ENCODE measurements at regions of chr13 and their contacts with region 1.

Region 1: DNA sequence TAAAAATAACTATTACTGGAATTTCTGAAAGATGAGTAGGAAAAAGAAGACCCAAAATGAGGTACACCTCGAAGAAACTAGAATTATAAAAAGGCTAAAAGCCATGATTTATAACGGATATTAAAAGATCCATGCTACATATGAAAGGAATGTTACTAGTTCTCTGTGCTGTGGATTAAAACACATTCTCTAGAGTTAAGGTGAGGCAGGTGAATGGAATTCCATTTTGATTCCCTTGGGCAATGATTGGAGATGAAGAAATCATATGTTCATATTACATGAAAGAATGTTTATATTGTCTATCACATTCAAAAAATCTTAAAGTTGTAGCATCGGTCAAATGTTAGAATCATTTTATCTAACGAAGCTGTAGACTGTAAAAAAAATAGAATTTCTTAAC is 783.7 kb downstream of the PCDH9 start:
- DNase-seq: no peak
- H3K4me3 ChIP-seq: no peak overlapping the region
- H3K27ac ChIP-seq: no peak overlapping the region
- H3K4me1 ChIP-seq: no peaks in the 10 kb centered on the region
- H3K27me3 ChIP-seq: no peaks in the 10 kb centered on the region
- CTCF ChIP-seq: no peak
- POLR2A ChIP-seq: no peak

Region 2: GRCh38 chr13:65149687-65150086 is 1296.7 kb before region 1 on chr13:
- intact Hi-C with region 1: loop called (anchors 10 kb)
- DNase-seq: no peak
- H3K4me3 ChIP-seq: no peak overlapping the region
- H3K27ac ChIP-seq: no peak overlapping the region
- H3K4me1 ChIP-seq: no peaks in the 10 kb centered on the region
- H3K27me3 ChIP-seq: no peaks in the 10 kb centered on the region
- CTCF ChIP-seq: no peak
- POLR2A ChIP-seq: no peak

Region 3: DNA sequence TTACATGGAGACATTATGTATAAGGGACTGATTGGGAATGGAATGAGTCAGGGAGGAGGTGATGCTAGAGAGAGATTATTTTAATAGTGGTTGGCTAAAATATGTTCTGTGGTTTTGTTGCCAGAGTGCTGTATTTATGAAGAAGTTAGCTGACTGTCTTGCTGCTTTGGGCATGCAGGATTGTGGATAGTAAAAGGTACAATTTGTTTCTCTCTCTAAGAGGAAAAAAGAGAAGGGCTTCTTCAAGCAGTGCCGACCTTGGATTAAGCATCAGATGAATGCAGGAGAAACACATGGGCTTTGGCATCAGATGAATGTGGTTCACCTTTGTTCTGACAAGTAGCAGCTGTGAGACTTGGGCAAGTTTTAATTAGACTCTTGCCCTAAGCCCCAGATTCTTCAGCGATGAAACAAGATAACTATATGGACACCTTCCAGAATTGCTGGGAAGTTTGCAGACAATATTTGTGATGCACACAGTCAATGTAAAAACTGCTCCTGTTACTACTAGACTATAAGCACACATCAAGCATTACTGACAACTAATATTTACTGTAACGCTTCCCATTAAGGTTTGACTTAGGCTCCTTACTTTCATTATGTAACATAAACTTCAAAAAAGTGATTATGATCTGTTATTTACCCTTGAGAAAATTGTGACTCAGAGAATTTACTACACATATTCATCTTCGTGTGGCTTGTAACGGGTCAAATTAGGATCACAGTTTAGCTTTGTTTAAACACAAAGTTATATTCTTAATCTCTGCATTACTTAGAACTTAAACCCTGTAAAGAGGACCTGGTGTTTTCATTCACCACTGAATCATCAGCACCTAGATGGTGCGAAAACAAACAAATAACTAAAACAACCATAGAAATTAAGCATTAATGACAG is 40.3 kb before region 1 on chr13:
- intact Hi-C with region 1: no loop called
- DNase-seq: peak in 1 of 2 donors; percentile 50
- H3K4me3 ChIP-seq: no peak overlapping the region
- H3K27ac ChIP-seq: no peak overlapping the region
- H3K4me1 ChIP-seq: no peaks in the 10 kb centered on the region
- H3K27me3 ChIP-seq: no peaks in the 10 kb centered on the region
- CTCF ChIP-seq: no peak
- POLR2A ChIP-seq: no peak

Measured in breast epithelium (tissue), 4 donors.